ENCODE measurements at regions of chr1 and their contacts with region 1.

Region 1: GRCh38 chr1:211258756-211259637 is at the start of gene RCOR3:
- DNase-seq: peak; percentile 81 to 92 (median 88)
- ATAC-seq: peak; percentile 89
- H3K4me3 ChIP-seq: peak within 1 kb of the TSS; percentile 87
- H3K4me3 Mint-ChIP-seq: peak within 1 kb of the TSS; percentile 86 to 97 (median 92)
- H3K27ac ChIP-seq: peak within 1 kb of the TSS; percentile 89
- H3K27ac Mint-ChIP-seq: peak within 1 kb of the TSS; percentile 90 to 99 (median 93)
- H3K4me1 ChIP-seq: peaks cover 6 to 17% of the 10 kb centered on the region in 2 donors
- H3K4me1 Mint-ChIP-seq: peaks cover 17 to 33% (median 23%) of the 10 kb centered on the region in 7 donors
- H3K27me3 ChIP-seq: no peaks in the 10 kb centered on the region
- H3K27me3 Mint-ChIP-seq: no peaks in the 10 kb centered on the region
- total RNA-seq, gene RCOR3: 42.3 to 98.0 (median 82.8) TPM

Region 2: DNA sequence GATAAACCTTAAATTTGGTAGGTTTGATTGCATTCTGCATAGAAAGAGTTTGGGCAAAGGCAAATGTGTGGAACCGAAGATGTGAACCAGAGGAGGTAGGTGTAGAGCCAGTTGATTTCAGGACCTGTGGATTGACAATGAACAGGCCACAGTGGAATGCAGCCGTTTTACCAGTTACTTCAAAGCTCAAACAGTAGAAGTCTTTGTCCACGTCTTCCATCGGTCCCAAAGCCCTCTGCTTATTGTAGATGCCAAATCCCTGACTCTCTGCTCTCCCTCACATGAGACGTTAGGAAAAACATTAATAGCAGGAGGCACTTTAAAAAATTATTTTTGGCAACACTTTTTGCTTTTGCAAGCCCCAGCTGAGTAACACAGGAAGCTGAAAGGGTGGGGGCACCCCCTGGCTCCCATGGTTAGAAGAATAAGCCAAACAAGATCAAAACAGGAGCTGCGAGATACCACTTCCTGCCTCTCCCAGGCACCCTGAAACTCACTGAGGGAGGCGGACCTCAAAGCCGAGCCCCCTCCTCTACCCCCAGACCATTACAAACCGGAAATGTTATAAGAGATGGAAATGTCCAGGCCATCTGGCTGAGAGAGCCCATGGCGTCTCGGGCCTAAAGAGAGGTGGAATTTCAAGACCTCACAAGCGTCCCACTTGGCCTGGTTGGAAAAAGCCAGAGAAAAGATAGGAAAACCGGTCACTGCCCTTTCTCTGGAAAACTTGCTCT is 1489.7 kb before region 1 on chr1:
- CTCF ChIA-PET with region 1: no interaction called
- POLR2A ChIA-PET with region 1: no interaction called
- intact Hi-C with region 1: loop called in 1 of 2 experiments (anchors 5 kb)
- DNase-seq: peak in 8 of 9 donors; percentile 73 to 85 (median 83)
- ATAC-seq: peak; percentile 80
- H3K4me3 ChIP-seq: peak overlapping the region; percentile 88
- H3K4me3 Mint-ChIP-seq: no peak overlapping the region
- H3K27ac ChIP-seq: peak overlapping the region; percentile 83
- H3K27ac Mint-ChIP-seq: no peak overlapping the region
- H3K4me1 ChIP-seq: peaks cover 44 to 58% of the 10 kb centered on the region in 2 donors
- H3K4me1 Mint-ChIP-seq: peaks cover 31 to 40% (median 35%) of the 10 kb centered on the region in 7 donors
- H3K27me3 ChIP-seq: no peaks in the 10 kb centered on the region
- H3K27me3 Mint-ChIP-seq: no peaks in the 10 kb centered on the region

Region 3: GRCh38 chr1:211133836-211134669 is 124.9 kb before region 1 on chr1 and contains the start of gene KCNH1:
- CTCF ChIA-PET with region 1: interaction called, 4 read pairs
- POLR2A ChIA-PET with region 1: interaction called, 7 read pairs
- intact Hi-C with region 1: loop called (anchors 1 kb)
- DNase-seq: peak; percentile 55 to 81 (median 71)
- ATAC-seq: peak; percentile 93
- H3K4me3 ChIP-seq: peak within 1 kb of the TSS; percentile 50
- H3K4me3 Mint-ChIP-seq: peak within 1 kb of the TSS; percentile 65 to 88 (median 78)
- H3K27ac ChIP-seq: no peak within 1 kb of the TSS
- H3K27ac Mint-ChIP-seq: no peak within 1 kb of the TSS
- H3K4me1 ChIP-seq: peaks cover 3 to 5% of the 10 kb centered on the region in 2 donors
- H3K4me1 Mint-ChIP-seq: peaks cover 0 to 10% (median 7%) of the 10 kb centered on the region in 7 donors
- H3K27me3 ChIP-seq: peaks cover 0 to 6% of the 10 kb centered on the region in 2 donors
- H3K27me3 Mint-ChIP-seq: peaks cover 19 to 89% (median 64%) of the 10 kb centered on the region in 5 donors
- total RNA-seq, gene KCNH1: not detected

Region 4: DNA sequence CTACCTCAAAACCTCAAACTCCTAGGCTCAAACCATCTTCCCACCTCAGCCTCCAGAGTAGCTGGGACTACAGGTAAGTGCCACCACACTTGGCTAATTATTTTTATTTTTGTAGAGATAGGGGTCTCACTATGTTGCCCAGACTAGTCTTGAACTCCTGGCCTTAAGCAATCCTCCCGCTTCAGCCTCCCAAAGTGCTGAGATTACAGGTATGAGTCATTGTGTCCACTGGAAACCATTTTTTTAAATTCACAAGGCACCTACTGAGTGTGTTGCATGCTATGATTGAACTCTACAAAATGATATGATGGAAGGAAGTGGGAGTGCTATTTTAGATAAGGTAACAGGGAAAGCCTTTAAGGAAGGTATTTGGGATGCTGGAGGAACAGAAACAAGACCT is 41.6 kb before region 1 on chr1:
- CTCF ChIA-PET with region 1: no interaction called
- POLR2A ChIA-PET with region 1: no interaction called
- intact Hi-C with region 1: no loop called
- DNase-seq: no peak
- ATAC-seq: no peak
- H3K4me3 ChIP-seq: no peak overlapping the region
- H3K4me3 Mint-ChIP-seq: no peak overlapping the region
- H3K27ac ChIP-seq: no peak overlapping the region
- H3K27ac Mint-ChIP-seq: no peak overlapping the region
- H3K4me1 ChIP-seq: no peaks in the 10 kb centered on the region
- H3K4me1 Mint-ChIP-seq: peaks cover 0 to 4% (median 0%) of the 10 kb centered on the region in 7 donors
- H3K27me3 ChIP-seq: peaks cover 0 to 3% of the 10 kb centered on the region in 2 donors
- H3K27me3 Mint-ChIP-seq: peaks cover 0 to 19% (median 0%) of the 10 kb centered on the region in 5 donors

Region 5: GRCh38 chr1:211279340-211279739 is 20.3 kb after region 1 on chr1:
- CTCF ChIA-PET with region 1: no interaction called
- POLR2A ChIA-PET with region 1: interaction called, 3 read pairs
- intact Hi-C with region 1: loop called in 1 of 2 experiments (anchors 1 kb)
- DNase-seq: no peak
- ATAC-seq: no peak
- H3K4me3 ChIP-seq: no peak overlapping the region
- H3K4me3 Mint-ChIP-seq: no peak overlapping the region
- H3K27ac ChIP-seq: no peak overlapping the region
- H3K27ac Mint-ChIP-seq: no peak overlapping the region
- H3K4me1 ChIP-seq: no peaks in the 10 kb centered on the region
- H3K4me1 Mint-ChIP-seq: peaks cover 0 to 7% (median 3%) of the 10 kb centered on the region in 7 donors
- H3K27me3 ChIP-seq: no peaks in the 10 kb centered on the region
- H3K27me3 Mint-ChIP-seq: no peaks in the 10 kb centered on the region

Region 6: DNA sequence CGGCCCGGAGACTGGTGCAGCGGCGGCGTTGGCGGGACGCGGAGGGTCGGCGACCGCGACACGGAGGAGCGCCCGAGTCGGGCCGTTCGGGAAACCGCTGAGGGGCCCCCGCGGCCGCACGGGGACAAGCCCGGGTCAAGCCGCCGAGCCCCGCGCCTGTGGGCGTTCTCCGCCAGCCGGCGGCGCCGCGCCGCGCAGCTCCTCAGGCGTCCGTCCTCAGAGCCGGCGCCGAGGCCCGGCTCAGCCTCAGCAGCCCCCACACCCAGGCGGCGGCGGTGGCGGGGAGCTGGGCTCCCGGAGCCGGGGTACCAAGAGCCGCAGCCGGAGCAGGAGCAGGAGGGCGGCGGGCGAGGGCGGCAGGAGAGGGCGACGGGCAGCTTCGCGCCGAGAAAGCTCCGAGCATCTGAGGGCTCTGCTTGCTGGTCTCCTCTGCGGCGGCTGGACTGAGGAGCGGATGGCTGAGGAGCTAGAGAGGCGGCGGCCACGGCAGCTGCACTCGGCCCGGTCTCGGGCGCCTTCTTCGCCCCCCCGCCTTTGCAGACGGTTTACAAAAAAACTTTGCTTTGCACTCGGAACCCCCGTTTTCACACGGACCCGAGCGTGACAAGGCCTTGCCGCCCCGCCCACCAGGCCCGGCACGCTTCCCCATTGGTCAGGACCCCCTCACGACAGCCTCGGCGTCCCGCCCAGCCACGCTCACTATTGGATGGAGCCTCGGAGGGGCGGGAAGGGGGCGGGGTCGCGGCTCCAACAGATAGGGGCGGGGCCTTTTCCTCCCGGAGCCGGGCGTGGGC is 319.8 kb after region 1 on chr1 and contains the start of gene SLC30A1:
- CTCF ChIA-PET with region 1: no interaction called
- POLR2A ChIA-PET with region 1: interaction called, 5 read pairs
- intact Hi-C with region 1: loop called (anchors 1 kb)
- DNase-seq: peak; percentile 99
- ATAC-seq: peak; percentile 97
- H3K4me3 ChIP-seq: peak within 1 kb of the TSS; percentile 66
- H3K4me3 Mint-ChIP-seq: peak within 1 kb of the TSS; percentile 88 to 96 (median 92)
- H3K27ac ChIP-seq: peak within 1 kb of the TSS; percentile 85
- H3K27ac Mint-ChIP-seq: peak within 1 kb of the TSS; percentile 72 to 93 (median 88)
- H3K4me1 ChIP-seq: peaks cover 3 to 5% of the 10 kb centered on the region in 2 donors
- H3K4me1 Mint-ChIP-seq: peaks cover 21 to 48% (median 44%) of the 10 kb centered on the region in 7 donors
- H3K27me3 ChIP-seq: no peaks in the 10 kb centered on the region
- H3K27me3 Mint-ChIP-seq: peaks cover 0 to 12% (median 0%) of the 10 kb centered on the region in 5 donors
- total RNA-seq, gene SLC30A1: 5.8 to 12.1 (median 8.8) TPM

Region 7: DNA sequence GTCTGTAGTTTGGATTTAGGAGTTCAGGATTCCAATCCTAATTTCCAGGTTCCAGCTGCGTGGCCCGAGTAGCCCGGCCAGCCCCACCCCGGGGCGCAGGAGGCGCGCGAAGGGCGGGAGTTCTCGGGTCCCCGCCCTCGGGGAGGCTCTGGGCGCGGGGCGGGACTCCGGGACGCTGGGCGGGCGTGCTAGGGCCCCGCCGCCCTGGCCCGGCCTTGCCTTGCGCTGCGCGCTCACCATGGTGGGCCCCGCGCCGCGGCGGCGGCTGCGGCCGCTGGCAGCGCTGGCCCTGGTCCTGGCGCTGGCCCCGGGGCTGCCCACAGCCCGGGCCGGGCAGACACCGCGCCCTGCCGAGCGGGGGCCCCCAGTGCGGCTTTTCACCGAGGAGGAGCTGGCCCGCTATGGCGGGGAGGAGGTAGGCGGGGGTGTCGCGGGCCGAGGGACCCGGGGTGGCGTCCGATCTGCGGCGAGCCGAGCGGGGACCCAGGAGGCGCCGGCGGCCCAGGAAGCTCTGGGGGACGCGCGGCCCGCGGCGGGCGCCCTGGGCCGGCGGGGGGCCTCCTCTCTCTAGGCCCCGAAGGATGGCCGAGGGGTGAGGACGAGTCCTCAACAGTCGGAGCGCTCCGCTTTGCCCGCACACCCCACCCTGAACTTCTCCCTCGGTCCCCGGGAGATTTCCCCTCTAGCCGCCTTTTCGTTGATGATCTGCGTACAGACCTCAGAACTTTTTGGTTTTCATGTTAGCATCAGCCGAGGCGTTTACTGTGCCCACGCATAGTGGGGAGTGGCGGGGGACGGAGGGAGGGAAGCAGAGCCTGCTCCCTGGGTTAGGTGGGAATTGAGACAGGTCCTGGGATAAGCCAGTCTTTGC is 1173.9 kb after region 1 on chr1 and contains the start of gene NENF:
- CTCF ChIA-PET with region 1: no interaction called
- POLR2A ChIA-PET with region 1: no interaction called
- intact Hi-C with region 1: loop called in 1 of 2 experiments (anchors 5 kb)
- DNase-seq: peak; percentile 53 to 85 (median 72)
- ATAC-seq: peak; percentile 99
- H3K4me3 ChIP-seq: peak within 1 kb of the TSS; percentile 62
- H3K4me3 Mint-ChIP-seq: peak within 1 kb of the TSS; percentile 77 to 87 (median 82)
- H3K27ac ChIP-seq: peak within 1 kb of the TSS; percentile 77
- H3K27ac Mint-ChIP-seq: peak within 1 kb of the TSS; percentile 42 to 86 (median 63)
- H3K4me1 ChIP-seq: peaks cover 9 to 21% of the 10 kb centered on the region in 2 donors
- H3K4me1 Mint-ChIP-seq: peaks cover 18 to 44% (median 30%) of the 10 kb centered on the region in 7 donors
- H3K27me3 ChIP-seq: no peaks in the 10 kb centered on the region
- H3K27me3 Mint-ChIP-seq: peaks cover 0 to 4% (median 0%) of the 10 kb centered on the region in 5 donors
- total RNA-seq, gene NENF: 16.0 to 23.5 (median 21.0) TPM

Measured in naive thymus-derived CD4-positive, alpha-beta T cell (primary cell).